H1 (cell line): ENCODE measurements at regions of chr6 and their contacts with region 1.

Region 1: DNA sequence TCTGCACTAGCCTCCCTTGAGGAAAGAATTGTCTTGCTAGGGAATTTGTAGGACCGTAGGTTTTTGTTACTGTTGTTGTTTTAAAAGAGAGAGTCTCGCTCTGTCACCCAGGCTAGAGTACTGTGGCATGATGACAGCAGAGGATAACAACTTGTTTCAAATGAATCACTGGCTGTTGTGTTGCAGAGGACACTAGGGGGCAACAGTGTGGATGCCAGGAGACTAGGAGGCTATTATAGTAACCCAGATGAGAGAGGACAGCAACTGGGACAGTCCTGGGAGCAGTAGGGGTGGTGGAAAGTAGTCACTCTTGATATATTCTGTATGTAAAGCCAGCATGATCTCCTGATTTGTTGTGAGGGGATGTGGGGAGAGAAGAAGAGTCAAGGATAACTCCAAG is 41.8 kb upstream of the LAMA4 start:
- DNase-seq: peak in 1 of 2 experiments; percentile 46
- H3K4me3 ChIP-seq: no peak overlapping the region
- H3K27ac ChIP-seq: no peak overlapping the region
- H3K4me1 ChIP-seq: no peaks in the 10 kb centered on the region
- H3K27me3 ChIP-seq: no peaks in the 10 kb centered on the region
- CTCF ChIP-seq: peak; percentile 33 to 71 (median 56)
- EP300 ChIP-seq: no peak
- POLR2A ChIP-seq: no peak
- RAD21 ChIP-seq: peak; percentile 48 to 52

Region 2: DNA sequence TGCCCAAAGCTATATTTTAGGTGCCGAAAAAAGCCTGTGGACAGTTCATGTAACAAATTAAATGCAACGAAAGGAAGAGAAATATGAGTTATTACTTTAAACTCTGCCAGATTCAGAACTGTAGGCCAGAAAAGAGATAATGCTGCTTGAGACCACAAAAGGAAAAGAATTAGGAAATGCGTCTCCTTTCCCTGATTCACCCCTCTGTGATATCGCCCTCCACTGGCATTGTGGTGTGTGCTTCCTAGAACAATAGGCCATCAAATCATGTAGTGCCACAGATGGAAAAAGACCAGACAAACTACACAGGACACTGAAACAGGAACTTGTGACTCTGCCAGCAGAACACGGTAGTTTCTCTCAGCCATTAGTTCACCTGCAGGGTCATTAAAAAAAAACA is 27.0 kb before region 1 on chr6:
- CTCF ChIA-PET with region 1: interaction called, 13 read pairs
- POLR2A ChIA-PET with region 1: no interaction called
- DNase-seq: no peak
- H3K4me3 ChIP-seq: no peak overlapping the region
- H3K27ac ChIP-seq: no peak overlapping the region
- H3K4me1 ChIP-seq: no peaks in the 10 kb centered on the region
- H3K27me3 ChIP-seq: no peaks in the 10 kb centered on the region
- CTCF ChIP-seq: peak in 2 of 3 experiments; percentile 39 to 45; a peak in 2 of 4 replicates
- EP300 ChIP-seq: no peak
- POLR2A ChIP-seq: no peak
- RAD21 ChIP-seq: peak; percentile 48 to 55

Region 3: DNA sequence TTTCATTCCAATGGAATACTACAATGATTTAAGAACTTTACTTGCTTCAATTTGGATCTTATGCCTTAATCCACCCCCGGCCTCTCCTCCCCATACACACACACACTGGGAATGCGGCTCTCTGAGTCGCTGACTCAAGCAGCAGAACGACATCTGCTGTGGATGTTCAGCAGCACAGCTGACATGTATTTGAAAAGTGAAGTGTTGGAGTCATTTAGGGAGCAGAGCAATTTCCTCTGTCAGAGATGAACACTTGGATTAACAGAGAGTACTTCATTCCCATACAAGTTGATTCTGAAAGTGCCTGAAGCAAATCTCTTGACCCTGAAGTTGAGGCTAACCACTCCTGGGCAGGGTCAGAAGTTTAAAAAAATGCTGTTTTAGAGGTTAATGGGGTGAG is 13.9 kb before region 1 on chr6:
- CTCF ChIA-PET with region 1: interaction called, 17 read pairs
- POLR2A ChIA-PET with region 1: interaction called, 3 read pairs
- DNase-seq: no peak
- H3K4me3 ChIP-seq: no peak overlapping the region
- H3K27ac ChIP-seq: no peak overlapping the region
- H3K4me1 ChIP-seq: no peaks in the 10 kb centered on the region
- H3K27me3 ChIP-seq: no peaks in the 10 kb centered on the region
- CTCF ChIP-seq: peak in 1 of 3 experiments; percentile 23; a peak in 1 of 4 replicates
- EP300 ChIP-seq: no peak
- POLR2A ChIP-seq: no peak
- RAD21 ChIP-seq: peak; percentile 5 to 22; a peak in 2 of 4 replicates

Region 4: DNA sequence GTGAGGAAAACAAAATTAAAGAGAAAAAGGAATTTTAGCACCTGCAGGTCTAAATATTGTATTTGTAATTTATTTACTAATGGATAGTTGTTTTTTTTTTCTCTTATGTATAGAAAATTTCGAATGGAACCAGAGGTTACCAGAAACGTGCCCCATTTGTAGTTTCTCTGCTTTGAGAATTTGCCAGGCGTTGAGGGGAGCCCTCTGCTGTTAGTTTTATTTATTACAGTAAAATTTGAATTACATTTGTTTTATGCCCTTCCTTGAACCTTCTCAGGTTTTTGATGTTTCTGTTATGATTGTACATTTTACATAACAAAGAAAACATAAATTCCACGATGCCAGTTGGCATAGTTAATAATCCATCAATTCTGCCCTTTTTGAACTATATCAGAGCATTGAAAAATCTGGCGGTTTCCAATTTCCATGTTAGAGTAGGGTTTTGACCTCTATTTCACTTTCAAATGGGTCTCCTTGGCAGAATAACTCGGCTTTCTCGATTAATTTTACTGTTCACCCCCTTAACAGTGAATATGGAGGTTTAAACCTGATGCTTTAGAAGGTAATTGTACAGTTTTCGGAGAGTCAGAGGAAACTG is 15.9 kb after region 1 on chr6:
- CTCF ChIA-PET with region 1: interaction called, 57 read pairs
- POLR2A ChIA-PET with region 1: no interaction called
- DNase-seq: no peak
- H3K4me3 ChIP-seq: no peak overlapping the region
- H3K27ac ChIP-seq: no peak overlapping the region
- H3K4me1 ChIP-seq: no peaks in the 10 kb centered on the region
- H3K27me3 ChIP-seq: no peaks in the 10 kb centered on the region
- CTCF ChIP-seq: peak in 2 of 3 experiments; percentile 38 to 62; a peak in 3 of 4 replicates
- EP300 ChIP-seq: no peak
- POLR2A ChIP-seq: no peak
- RAD21 ChIP-seq: peak; percentile 75

Region 5: GRCh38 chr6:112317041-112317860 is 21.1 kb after region 1 on chr6:
- CTCF ChIA-PET with region 1: interaction called, 11 read pairs
- POLR2A ChIA-PET with region 1: no interaction called
- DNase-seq: no peak
- H3K4me3 ChIP-seq: no peak overlapping the region
- H3K27ac ChIP-seq: no peak overlapping the region
- H3K4me1 ChIP-seq: no peaks in the 10 kb centered on the region
- H3K27me3 ChIP-seq: no peaks in the 10 kb centered on the region
- CTCF ChIP-seq: no peak
- EP300 ChIP-seq: no peak
- POLR2A ChIP-seq: no peak
- RAD21 ChIP-seq: no peak